HEK293 (cell line): ENCODE measurements at regions of chr6 and their contacts with region 1.

Region 1: GRCh38 chr6:31827286-31828079 is at the start of gene HSPA1B:
- H3K4me3 ChIP-seq: peak within 1 kb of the TSS; percentile 65
- H3K27ac ChIP-seq: peak within 1 kb of the TSS; percentile 69
- H3K4me1 ChIP-seq: no peaks in the 10 kb centered on the region
- CTCF ChIP-seq: peak; percentile 35; the same call in 1 of the 2 replicates

Region 2: GRCh38 chr6:31541658-31542521 is 285.6 kb before region 1 on chr6 and contains the start of gene DDX39B:
- CTCF ChIA-PET with region 1: interaction called, 5 read pairs
- POLR2A ChIA-PET with region 1: interaction called, 30 read pairs
- H3K4me3 ChIP-seq: peak within 1 kb of the TSS; percentile 64
- H3K27ac ChIP-seq: peak within 1 kb of the TSS; percentile 100
- H3K4me1 ChIP-seq: peaks cover 14% of the 10 kb centered on the region
- CTCF ChIP-seq: no peak

Region 3: DNA sequence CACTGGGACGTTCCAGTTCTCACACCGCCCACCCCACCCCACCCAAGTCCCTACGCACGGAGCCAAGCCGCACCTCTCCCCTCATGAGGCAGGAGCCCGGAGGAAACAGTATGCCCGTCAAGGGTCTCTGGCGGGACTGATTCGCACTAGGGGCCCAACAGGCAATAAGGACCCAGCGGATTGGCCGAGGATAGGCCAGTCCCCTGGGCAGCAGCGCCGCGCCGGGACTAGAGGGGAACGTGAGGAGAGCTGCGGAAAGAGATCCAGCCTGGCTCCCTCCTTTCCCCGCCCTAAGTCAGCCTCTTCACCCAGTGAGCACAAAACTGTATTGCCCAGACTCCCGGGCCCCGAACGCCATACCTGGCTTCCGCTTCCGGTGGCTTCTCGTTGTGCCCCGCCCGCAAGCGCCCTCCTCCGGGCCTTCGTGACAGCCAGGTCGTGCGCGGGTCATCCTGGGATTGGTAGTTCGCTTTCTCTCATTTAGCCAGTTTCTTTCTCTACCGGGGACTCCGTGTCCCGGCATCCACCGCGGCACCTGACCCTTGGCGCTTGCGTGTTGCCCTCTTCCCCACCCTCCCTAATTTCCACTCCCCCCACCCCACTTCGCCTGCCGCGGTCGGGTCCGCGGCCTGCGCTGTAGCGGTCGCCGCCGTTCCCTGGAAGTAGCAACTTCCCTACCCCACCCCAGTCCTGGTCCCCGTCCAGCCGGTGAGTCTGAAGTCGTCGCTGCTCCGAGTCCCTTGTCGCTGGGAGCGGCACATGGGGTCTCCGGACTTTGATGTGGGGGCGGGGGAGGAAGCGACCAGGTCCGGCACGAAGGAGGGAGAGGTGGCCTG is 161.8 kb before region 1 on chr6 and contains the start of gene CSNK2B:
- CTCF ChIA-PET with region 1: no interaction called
- POLR2A ChIA-PET with region 1: interaction called, 32 read pairs
- H3K4me3 ChIP-seq: peak within 1 kb of the TSS; percentile 92
- H3K27ac ChIP-seq: peak within 1 kb of the TSS; percentile 92
- H3K4me1 ChIP-seq: peaks cover 6% of the 10 kb centered on the region; the same call in 1 of the 2 replicates
- CTCF ChIP-seq: peak; percentile 75

Region 4: GRCh38 chr6:31729515-31729978 is 97.9 kb before region 1 on chr6:
- CTCF ChIA-PET with region 1: interaction called, 9 read pairs
- POLR2A ChIA-PET with region 1: interaction called, 102 read pairs
- H3K4me3 ChIP-seq: peak overlapping the region; percentile 74
- H3K27ac ChIP-seq: peak overlapping the region; percentile 67; the same call in 1 of the 2 replicates
- H3K4me1 ChIP-seq: peaks cover 3% of the 10 kb centered on the region
- CTCF ChIP-seq: peak; percentile 94

Region 5: GRCh38 chr6:31776989-31777666 is 50.4 kb before region 1 on chr6 and contains the start of gene VWA7:
- CTCF ChIA-PET with region 1: interaction called, 5 read pairs
- POLR2A ChIA-PET with region 1: interaction called, 48 read pairs
- H3K4me3 ChIP-seq: peak within 1 kb of the TSS; percentile 21
- H3K27ac ChIP-seq: no peak within 1 kb of the TSS
- H3K4me1 ChIP-seq: peaks cover 4% of the 10 kb centered on the region
- CTCF ChIP-seq: no peak

Region 6: GRCh38 chr6:31815025-31815838 is 12.3 kb before region 1 on chr6 and contains the starts of genes HSPA1A and HSPA1L:
- CTCF ChIA-PET with region 1: interaction called, 10 read pairs
- POLR2A ChIA-PET with region 1: interaction called, 206 read pairs
- H3K4me3 ChIP-seq: peak within 1 kb of the TSS; percentile 46
- H3K27ac ChIP-seq: peak within 1 kb of the TSS; percentile 80
- H3K4me1 ChIP-seq: peaks cover 4% of the 10 kb centered on the region; the same call in 1 of the 2 replicates
- CTCF ChIP-seq: no peak

Region 7: GRCh38 chr6:31901953-31902643 is 74.6 kb after region 1 on chr6 and contains the start of gene ZBTB12:
- CTCF ChIA-PET with region 1: interaction called, 3 read pairs
- POLR2A ChIA-PET with region 1: interaction called, 16 read pairs
- H3K4me3 ChIP-seq: peak within 1 kb of the TSS; percentile 62
- H3K27ac ChIP-seq: peak within 1 kb of the TSS; percentile 9
- H3K4me1 ChIP-seq: peaks cover 9% of the 10 kb centered on the region
- CTCF ChIP-seq: peak; percentile 57; the same call in 1 of the 2 replicates

Region 8: DNA sequence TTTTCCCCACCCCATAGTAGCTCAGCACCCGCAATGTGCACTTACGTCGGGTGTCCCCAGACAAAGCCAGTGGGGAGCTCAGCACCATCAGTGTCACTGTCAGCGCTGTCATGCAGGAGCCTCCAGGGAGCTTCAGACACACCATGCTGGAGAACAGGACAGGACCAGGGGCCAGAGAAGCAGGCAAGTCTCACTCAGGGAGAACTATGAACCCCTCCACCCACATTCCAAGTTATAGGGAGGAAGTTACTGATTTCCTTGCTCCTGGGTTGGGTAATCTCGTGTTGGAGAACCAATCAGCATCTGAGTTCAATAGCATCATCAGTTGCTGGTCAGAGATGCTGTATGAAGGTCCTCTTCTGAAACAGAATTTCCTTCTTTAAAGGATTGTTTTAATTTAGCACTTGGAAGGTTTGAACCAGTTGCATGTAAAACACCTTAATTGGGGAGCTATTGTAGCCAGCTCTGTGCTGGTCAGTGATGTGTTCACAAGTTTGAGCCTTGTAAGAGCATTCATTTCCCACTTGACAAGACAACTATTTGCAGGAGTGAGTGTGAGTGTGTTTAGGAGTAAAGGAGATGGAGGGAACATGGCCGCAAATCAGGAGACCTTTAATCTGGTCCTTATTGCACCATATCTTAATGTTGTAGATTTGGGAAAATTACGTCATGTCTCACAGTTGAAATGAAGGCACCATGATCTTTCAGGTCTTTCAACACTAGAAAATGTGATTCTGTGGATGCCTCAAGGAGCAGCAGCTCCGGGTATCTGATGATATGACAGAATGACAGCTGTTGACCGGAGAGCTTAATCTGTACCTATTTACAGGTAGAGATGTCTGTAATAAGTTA is 762.3 kb after region 1 on chr6 and contains the start of gene HLA-DRB1:
- CTCF ChIA-PET with region 1: no interaction called
- POLR2A ChIA-PET with region 1: no interaction called
- H3K4me3 ChIP-seq: no peak within 1 kb of the TSS
- H3K27ac ChIP-seq: no peak within 1 kb of the TSS
- H3K4me1 ChIP-seq: no peaks in the 10 kb centered on the region
- CTCF ChIP-seq: no peak